ENCODE measurements at regions of chr10 and their contacts with region 1.

Region 1: DNA sequence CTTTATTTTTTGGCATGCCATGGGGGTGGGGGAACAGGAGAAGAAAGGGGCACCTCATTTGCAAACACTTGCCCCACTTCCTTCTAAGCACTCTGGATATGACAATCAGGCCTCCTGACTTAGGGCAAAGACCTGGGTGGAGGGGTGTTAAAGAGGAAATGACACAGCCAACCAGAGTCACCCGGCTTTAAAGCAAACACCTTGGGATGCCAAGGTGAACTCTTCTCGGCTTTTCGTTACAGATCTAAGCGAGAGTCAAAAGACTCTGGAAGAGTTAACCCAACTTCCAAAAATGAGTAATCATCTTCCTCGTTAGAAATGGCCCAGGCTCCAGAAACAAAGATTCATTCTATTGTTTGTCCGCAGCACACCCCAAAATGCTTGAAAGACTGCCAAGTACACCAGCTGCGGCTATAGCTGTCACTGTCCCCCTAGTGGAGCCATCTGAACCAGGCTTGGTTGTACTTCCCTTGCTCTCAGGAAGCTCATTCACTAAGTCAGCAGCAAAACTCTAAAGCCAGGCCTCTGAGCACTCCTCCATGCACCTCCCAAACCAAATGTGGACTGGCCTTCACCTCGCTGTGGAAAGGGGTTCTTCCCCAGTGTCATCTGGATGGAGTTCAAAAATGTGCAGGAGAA is 24.8 kb downstream of the FAM53B start:
- DNase-seq: peak; percentile 81 to 89 (median 84)
- H3K4me3 ChIP-seq: peak overlapping the region in 1 of 2 donors; percentile 19
- H3K4me3 Mint-ChIP-seq: peak overlapping the region; percentile 59 to 83 (median 72)
- H3K27ac ChIP-seq: peak overlapping the region; percentile 81
- H3K27ac Mint-ChIP-seq: peak overlapping the region; percentile 87 to 98 (median 96)
- H3K4me1 ChIP-seq: peaks cover 100% of the 10 kb centered on the region
- H3K4me1 Mint-ChIP-seq: peaks cover 79 to 97% (median 89%) of the 10 kb centered on the region in 4 donors
- H3K27me3 ChIP-seq: no peaks in the 10 kb centered on the region
- H3K27me3 Mint-ChIP-seq: no peaks in the 10 kb centered on the region

Region 2: DNA sequence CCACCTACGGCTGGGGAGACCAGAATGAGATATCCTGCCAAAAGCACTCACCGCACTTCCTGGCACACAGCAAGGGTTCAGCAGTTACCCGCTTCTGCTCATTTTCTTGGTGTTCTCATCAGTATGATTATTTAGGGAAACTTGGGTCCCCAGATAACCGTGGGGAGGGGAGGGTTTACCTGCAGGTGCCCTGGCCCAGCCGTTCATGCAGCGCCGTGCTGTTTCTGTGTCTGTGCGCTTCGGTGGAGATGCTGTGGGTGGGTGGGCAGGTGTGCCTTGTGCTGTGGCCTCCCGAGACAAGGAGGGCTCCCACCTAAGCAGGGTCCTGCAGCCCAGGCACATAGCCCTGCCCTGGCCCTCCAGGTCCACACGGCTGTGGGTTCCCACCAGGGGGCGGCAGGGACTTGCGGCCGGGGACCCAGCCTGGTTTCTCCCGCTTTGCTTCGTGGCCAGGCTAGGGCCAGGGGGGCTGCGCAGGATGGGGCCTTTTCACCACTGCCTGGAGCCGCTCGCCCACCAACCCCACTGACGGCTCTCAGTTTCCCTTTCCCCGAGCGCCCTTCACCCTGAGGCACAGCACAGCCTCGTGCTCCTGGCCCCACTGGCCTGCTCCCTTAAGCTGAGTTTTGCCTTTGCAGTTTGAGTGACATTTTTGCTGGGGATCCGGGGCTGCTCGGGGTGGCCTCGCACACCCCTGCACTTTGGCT is 179.2 kb before region 1 on chr10:
- CTCF ChIA-PET with region 1: interaction called, 22 read pairs
- POLR2A ChIA-PET with region 1: interaction called, 5 read pairs
- intact Hi-C with region 1: loop called (anchors 1 kb)
- DNase-seq: peak; percentile 59 to 69 (median 63)
- H3K4me3 ChIP-seq: no peak overlapping the region
- H3K4me3 Mint-ChIP-seq: peak overlapping the region in 1 of 8 donors; percentile 36
- H3K27ac ChIP-seq: no peak overlapping the region
- H3K27ac Mint-ChIP-seq: peak overlapping the region in 1 of 7 donors; percentile 65
- H3K4me1 ChIP-seq: peaks cover 8% of the 10 kb centered on the region
- H3K4me1 Mint-ChIP-seq: peaks cover 0 to 10% (median 2%) of the 10 kb centered on the region in 4 donors
- H3K27me3 ChIP-seq: no peaks in the 10 kb centered on the region
- H3K27me3 Mint-ChIP-seq: no peaks in the 10 kb centered on the region

Region 3: DNA sequence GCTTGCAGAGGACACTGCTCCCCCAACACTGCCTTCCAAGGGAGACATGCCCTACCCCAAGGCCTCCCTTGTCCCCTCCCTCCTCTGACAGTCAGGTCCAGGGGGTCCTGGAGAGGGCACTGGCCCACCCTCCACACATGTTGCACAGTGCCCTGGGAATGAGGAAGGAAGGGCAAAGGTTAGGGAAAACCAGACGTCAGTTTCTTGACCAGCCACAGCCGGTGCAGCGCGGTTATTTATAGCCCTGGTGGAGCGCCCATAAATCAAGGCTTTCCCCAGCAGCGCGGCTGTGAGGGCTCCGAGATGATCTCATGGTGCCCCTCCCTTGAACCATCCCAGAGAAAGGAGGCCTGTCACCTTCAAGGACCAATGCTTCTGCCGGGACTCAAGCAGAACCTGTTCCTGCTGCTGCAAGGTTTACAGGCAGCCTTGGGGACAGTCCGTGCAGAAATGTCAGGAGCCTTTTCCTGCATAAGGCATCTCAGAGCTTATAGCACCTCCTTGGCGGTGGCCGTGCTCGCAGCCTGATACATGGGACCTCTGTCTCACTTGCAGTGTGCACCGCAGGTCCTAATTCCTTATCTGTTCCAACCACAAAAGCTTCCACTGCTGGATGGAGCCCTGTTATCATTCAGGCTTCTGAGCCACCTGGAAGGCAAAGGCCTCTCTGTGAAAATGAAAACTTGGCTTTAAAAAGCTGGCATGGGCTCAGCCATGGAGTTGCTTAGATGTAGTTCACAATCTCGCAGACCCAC is 130.4 kb before region 1 on chr10:
- CTCF ChIA-PET with region 1: no interaction called
- POLR2A ChIA-PET with region 1: no interaction called
- intact Hi-C with region 1: no loop called
- DNase-seq: no peak
- H3K4me3 ChIP-seq: no peak overlapping the region
- H3K4me3 Mint-ChIP-seq: no peak overlapping the region
- H3K27ac ChIP-seq: no peak overlapping the region
- H3K27ac Mint-ChIP-seq: no peak overlapping the region
- H3K4me1 ChIP-seq: no peaks in the 10 kb centered on the region
- H3K4me1 Mint-ChIP-seq: no peaks in the 10 kb centered on the region
- H3K27me3 ChIP-seq: no peaks in the 10 kb centered on the region
- H3K27me3 Mint-ChIP-seq: no peaks in the 10 kb centered on the region

Region 4: GRCh38 chr10:124641282-124642087 is 77.8 kb before region 1 on chr10:
- CTCF ChIA-PET with region 1: interaction called, 200 read pairs
- POLR2A ChIA-PET with region 1: interaction called, 297 read pairs
- intact Hi-C with region 1: loop called (anchors 1 kb)
- DNase-seq: peak in 4 of 5 donors; percentile 42 to 76 (median 52)
- H3K4me3 ChIP-seq: peak overlapping the region in 1 of 2 donors; percentile 17
- H3K4me3 Mint-ChIP-seq: peak overlapping the region; percentile 4 to 87 (median 81)
- H3K27ac ChIP-seq: peak overlapping the region; percentile 36
- H3K27ac Mint-ChIP-seq: peak overlapping the region; percentile 89 to 97 (median 95)
- H3K4me1 ChIP-seq: peaks cover 95% of the 10 kb centered on the region
- H3K4me1 Mint-ChIP-seq: peaks cover 58 to 100% (median 87%) of the 10 kb centered on the region in 4 donors
- H3K27me3 ChIP-seq: no peaks in the 10 kb centered on the region
- H3K27me3 Mint-ChIP-seq: no peaks in the 10 kb centered on the region

Region 5: GRCh38 chr10:124671486-124672075 is 47.8 kb before region 1 on chr10:
- CTCF ChIA-PET with region 1: interaction called, 19 read pairs
- POLR2A ChIA-PET with region 1: interaction called, 79 read pairs
- intact Hi-C with region 1: no loop called
- DNase-seq: peak in 1 of 5 donors; percentile 33
- H3K4me3 ChIP-seq: no peak overlapping the region
- H3K4me3 Mint-ChIP-seq: peak overlapping the region in 7 of 8 donors; percentile 53 to 84 (median 67)
- H3K27ac ChIP-seq: peak overlapping the region; percentile 43
- H3K27ac Mint-ChIP-seq: peak overlapping the region; percentile 83 to 96 (median 90)
- H3K4me1 ChIP-seq: peaks cover 100% of the 10 kb centered on the region
- H3K4me1 Mint-ChIP-seq: peaks cover 68 to 99% (median 88%) of the 10 kb centered on the region in 4 donors
- H3K27me3 ChIP-seq: no peaks in the 10 kb centered on the region
- H3K27me3 Mint-ChIP-seq: no peaks in the 10 kb centered on the region

Region 6: DNA sequence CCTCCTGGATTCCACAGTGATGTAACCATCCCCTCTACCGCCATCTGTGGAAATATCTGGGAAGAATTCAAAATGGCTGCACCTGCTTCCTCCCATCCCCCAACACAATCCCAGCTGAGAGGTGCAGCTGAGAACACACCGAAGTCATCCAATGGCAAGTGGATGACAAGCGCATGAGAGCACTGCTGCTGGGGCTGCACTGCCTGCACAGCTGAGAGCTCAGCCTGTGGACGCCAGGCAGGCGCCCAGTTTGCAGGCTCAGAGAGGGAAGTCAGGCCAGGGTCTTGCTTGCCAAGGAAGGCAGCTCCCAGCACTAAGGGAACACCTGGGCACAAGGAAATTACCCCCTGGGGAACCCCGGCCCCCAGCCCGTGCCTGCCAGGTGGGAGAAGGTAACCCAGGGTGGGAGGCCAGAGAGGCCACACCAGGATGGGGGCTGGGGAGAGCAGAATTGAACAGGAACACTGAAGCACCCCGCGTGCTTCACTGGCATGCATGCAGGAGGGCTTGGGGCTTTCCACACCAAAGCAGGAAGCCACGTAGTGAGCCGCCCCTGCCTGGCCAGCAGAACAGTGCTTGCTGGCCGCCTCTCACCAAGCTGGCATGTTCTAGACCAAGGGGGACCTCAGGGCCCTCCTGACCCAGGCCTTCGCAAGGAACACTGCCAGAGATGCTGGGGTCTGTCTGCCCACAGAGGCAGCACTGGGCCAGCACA is 21.3 kb before region 1 on chr10:
- CTCF ChIA-PET with region 1: interaction called, 201 read pairs
- POLR2A ChIA-PET with region 1: interaction called, 544 read pairs
- intact Hi-C with region 1: loop called (anchors 1 kb)
- DNase-seq: peak; percentile 40 to 79 (median 50)
- H3K4me3 ChIP-seq: peak overlapping the region; percentile 11 to 30
- H3K4me3 Mint-ChIP-seq: peak overlapping the region; percentile 20 to 96 (median 80)
- H3K27ac ChIP-seq: peak overlapping the region; percentile 90
- H3K27ac Mint-ChIP-seq: peak overlapping the region; percentile 92 to 99 (median 97)
- H3K4me1 ChIP-seq: peaks cover 100% of the 10 kb centered on the region
- H3K4me1 Mint-ChIP-seq: peaks cover 69 to 100% (median 93%) of the 10 kb centered on the region in 4 donors
- H3K27me3 ChIP-seq: no peaks in the 10 kb centered on the region
- H3K27me3 Mint-ChIP-seq: no peaks in the 10 kb centered on the region

Region 7: DNA sequence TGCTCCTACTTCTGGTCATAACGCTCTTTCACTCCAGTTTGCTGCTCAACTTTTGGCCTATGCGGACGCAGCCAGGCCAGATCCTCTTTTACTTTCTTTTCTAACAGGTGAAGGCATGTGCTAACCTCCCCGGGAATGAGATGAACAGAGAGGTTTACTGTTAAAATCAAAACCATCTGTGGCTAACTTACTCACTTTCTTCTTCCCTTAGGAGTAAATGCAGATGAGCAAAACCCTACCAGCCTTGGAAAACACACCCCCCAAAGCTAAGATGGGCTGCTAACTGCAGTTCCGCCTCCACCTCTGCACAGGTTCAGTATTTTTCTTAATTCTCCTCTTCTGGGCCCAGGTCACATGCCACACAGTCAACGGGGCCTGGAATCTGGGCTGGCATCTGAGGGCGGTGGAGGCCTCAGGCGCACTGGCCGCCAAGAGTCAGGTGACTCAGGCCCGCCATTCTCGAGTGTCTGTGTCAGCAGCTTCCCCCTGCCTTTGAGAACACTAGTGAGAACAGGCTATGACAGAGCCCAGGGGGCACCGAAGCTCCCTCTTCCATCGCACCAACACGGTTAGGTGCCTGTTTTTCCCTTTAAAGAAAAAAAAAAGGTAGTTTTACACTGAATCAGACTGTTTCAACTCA is 13.7 kb after region 1 on chr10:
- CTCF ChIA-PET with region 1: interaction called, 556 read pairs
- POLR2A ChIA-PET with region 1: interaction called, 265 read pairs
- intact Hi-C with region 1: loop called (anchors 1 kb)
- DNase-seq: peak; percentile 37 to 77 (median 48)
- H3K4me3 ChIP-seq: peak overlapping the region; percentile 9 to 15
- H3K4me3 Mint-ChIP-seq: peak overlapping the region; percentile 72 to 93 (median 80)
- H3K27ac ChIP-seq: peak overlapping the region; percentile 78
- H3K27ac Mint-ChIP-seq: peak overlapping the region; percentile 87 to 96 (median 94)
- H3K4me1 ChIP-seq: peaks cover 100% of the 10 kb centered on the region
- H3K4me1 Mint-ChIP-seq: peaks cover 77 to 100% (median 90%) of the 10 kb centered on the region in 4 donors
- H3K27me3 ChIP-seq: no peaks in the 10 kb centered on the region
- H3K27me3 Mint-ChIP-seq: no peaks in the 10 kb centered on the region

Region 8: GRCh38 chr10:124886195-124886594 is 166.9 kb after region 1 on chr10:
- CTCF ChIA-PET with region 1: no interaction called
- POLR2A ChIA-PET with region 1: no interaction called
- intact Hi-C with region 1: no loop called
- DNase-seq: no peak
- H3K4me3 ChIP-seq: no peak overlapping the region
- H3K4me3 Mint-ChIP-seq: no peak overlapping the region
- H3K27ac ChIP-seq: no peak overlapping the region
- H3K27ac Mint-ChIP-seq: no peak overlapping the region
- H3K4me1 ChIP-seq: no peaks in the 10 kb centered on the region
- H3K4me1 Mint-ChIP-seq: no peaks in the 10 kb centered on the region
- H3K27me3 ChIP-seq: no peaks in the 10 kb centered on the region
- H3K27me3 Mint-ChIP-seq: no peaks in the 10 kb centered on the region

Measured in CD4-positive, alpha-beta memory T cell (primary cell).